ENCODE measurements at regions of chr7 and their contacts with region 1.

Region 1: DNA sequence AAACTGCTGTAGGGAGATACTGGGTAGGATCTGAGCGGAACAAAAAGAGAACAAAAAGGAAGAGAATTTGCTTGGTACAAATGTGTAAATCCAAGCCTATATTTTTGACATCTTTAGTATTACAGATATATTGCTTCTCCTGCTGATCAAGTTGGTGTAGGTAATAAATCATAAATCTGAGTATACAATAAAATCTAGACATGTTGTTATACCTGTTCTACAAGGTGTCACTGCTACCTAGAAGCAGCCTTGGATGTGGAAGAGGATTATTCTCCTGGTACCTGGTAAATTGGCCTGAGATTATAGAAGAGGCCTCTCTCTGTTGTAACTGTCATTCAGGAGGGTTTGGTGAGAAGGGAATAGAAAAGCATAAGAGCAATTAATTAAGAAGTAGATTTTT is 89.9 kb upstream of the LSM8 start:
- DNase-seq: no peak
- H3K4me3 ChIP-seq: no peak overlapping the region
- H3K27ac ChIP-seq: no peak overlapping the region
- H3K4me1 ChIP-seq: no peaks in the 10 kb centered on the region
- H3K27me3 ChIP-seq: no peaks in the 10 kb centered on the region
- CTCF ChIP-seq: no peak
- POLR2A ChIP-seq: no peak

Region 2: GRCh38 chr7:117750612-117751563 is 343.2 kb before region 1 on chr7:
- intact Hi-C with region 1: loop called in 1 of 2 experiments (anchors 10 kb)
- DNase-seq: no peak
- H3K4me3 ChIP-seq: no peak overlapping the region
- H3K27ac ChIP-seq: no peak overlapping the region
- H3K4me1 ChIP-seq: no peaks in the 10 kb centered on the region
- H3K27me3 ChIP-seq: no peaks in the 10 kb centered on the region
- CTCF ChIP-seq: peak; percentile 27 to 57 (median 45)
- POLR2A ChIP-seq: no peak